Cardiac septum (tissue), 1 donor: ENCODE measurements at regions of chr9 and their contacts with region 1.

Region 1: GRCh38 chr9:127589955-127590370 is 22.1 kb upstream of the STXBP1 start:
- DNase-seq: no peak

Region 2: GRCh38 chr9:127503947-127504782 is 85.8 kb before region 1 on chr9:
- intact Hi-C with region 1: loop called (anchors 1 kb)
- DNase-seq: peak; percentile 88

Region 3: GRCh38 chr9:127734747-127735529 is 145.0 kb after region 1 on chr9 and contains the start of gene TOR2A:
- intact Hi-C with region 1: loop called (anchors 1 kb)
- DNase-seq: peak; percentile 98
- total RNA-seq, gene TOR2A: 4.4 TPM

Region 4: DNA sequence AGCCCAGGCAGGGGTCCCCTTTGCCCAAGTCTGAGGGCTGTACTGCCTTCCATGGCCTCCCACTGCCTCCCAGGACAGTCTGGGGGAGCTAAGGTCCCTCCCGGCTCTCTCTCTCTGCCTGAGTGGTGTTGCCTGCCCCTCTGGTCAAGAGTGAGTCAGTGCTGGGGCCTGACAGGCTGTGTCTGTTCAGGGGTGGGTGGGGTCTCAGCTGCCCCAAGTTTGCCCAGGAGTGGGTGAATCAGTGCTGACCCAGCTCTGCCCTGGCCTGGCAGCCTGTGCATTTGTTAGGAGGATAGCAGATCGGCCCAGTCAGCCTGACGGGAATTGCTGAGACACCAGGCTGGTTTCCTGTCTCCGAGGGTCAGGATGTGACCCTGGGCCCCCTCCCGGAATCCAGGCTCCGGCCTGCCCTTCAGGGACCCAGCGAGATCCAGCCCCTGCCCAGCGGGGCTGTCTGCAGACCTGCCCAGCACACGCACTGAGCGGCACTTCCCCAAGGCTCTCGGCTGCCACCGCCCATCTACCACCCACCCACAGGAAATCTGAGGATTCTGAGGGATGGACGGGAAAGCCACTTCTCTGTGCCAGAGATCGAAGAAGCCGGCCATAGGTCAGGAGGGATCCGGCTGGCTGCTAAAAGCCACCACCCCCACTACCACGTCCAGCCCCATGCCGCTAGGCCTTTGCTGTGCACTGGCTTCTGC is 248.6 kb after region 1 on chr9:
- intact Hi-C with region 1: no loop called
- DNase-seq: peak; percentile 87